ENCODE measurements at regions of chr3 and their contacts with region 1.

Region 1: GRCh38 chr3:120506828-120507774 is 56.3 kb upstream of the FSTL1 start:
- DNase-seq: peak in 3 of 9 experiments; percentile 6 to 29 (median 7)
- ATAC-seq: no peak
- H3K4me3 ChIP-seq: no peak overlapping the region
- H3K4me3 Mint-ChIP-seq: no peak overlapping the region
- H3K27ac ChIP-seq: no peak overlapping the region
- H3K27ac Mint-ChIP-seq: no peak overlapping the region
- H3K4me1 ChIP-seq: no peaks in the 10 kb centered on the region
- H3K4me1 Mint-ChIP-seq: no peaks in the 10 kb centered on the region
- H3K27me3 ChIP-seq: no peaks in the 10 kb centered on the region
- H3K27me3 Mint-ChIP-seq: peaks cover 23% of the 10 kb centered on the region
- CTCF ChIP-seq: peak; percentile 20

Region 2: DNA sequence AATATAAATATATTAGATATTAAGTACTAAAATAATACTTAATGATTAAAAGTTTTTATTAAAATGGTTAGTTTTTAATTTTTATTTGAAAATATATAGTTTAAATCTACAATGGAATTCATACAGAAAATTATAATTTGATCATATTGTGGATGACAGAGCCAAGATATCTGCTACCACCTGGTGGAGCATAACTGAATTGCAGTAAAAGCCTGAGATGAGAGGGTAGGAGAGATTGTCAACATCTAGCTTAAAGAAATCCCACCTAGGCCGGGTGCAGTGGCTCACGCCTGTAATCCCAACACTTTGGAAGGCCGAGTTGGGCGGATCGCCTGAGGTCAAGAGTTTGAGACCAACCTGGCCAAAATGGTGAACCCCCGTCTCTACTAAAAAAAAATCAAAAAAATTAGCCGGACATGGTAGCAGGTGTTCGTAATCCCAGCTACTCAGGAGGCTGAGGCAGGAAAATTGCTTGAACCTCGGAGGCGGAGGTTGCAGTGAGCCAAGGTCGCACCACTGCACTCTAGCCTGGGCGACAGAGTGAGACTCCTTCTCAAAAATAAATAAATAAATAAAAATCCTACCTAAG is 1792.9 kb after region 1 on chr3:
- CTCF ChIA-PET with region 1: no interaction called
- POLR2A ChIA-PET with region 1: no interaction called
- intact Hi-C with region 1: loop called in 1 of 2 experiments (anchors 10 kb)
- DNase-seq: peak in 5 of 9 experiments; percentile 7 to 74 (median 54)
- ATAC-seq: no peak
- H3K4me3 ChIP-seq: no peak overlapping the region
- H3K4me3 Mint-ChIP-seq: no peak overlapping the region
- H3K27ac ChIP-seq: no peak overlapping the region
- H3K27ac Mint-ChIP-seq: no peak overlapping the region
- H3K4me1 ChIP-seq: peaks cover 5% of the 10 kb centered on the region
- H3K4me1 Mint-ChIP-seq: peaks cover 8% of the 10 kb centered on the region
- H3K27me3 ChIP-seq: no peaks in the 10 kb centered on the region
- H3K27me3 Mint-ChIP-seq: no peaks in the 10 kb centered on the region
- CTCF ChIP-seq: peak; percentile 84